Heart right ventricle (tissue), 16 donors: ENCODE measurements at regions of chr9 and their contacts with region 1.

Region 1: GRCh38 chr9:76658535-76659231 is 105.6 kb upstream of the PCA3 start:
- DNase-seq: no peak
- ATAC-seq: peak in 7 of 8 donors; percentile 75 to 93 (median 84)
- H3K4me3 ChIP-seq: no peak overlapping the region
- H3K27ac ChIP-seq: no peak overlapping the region
- H3K4me1 ChIP-seq: peaks cover 0 to 56% (median 14%) of the 10 kb centered on the region in 9 donors
- H3K27me3 ChIP-seq: no peaks in the 10 kb centered on the region
- CTCF ChIP-seq: peak in 8 of 9 donors; percentile 44 to 76 (median 63)

Region 2: GRCh38 chr9:76379512-76379911 is 279.2 kb before region 1 on chr9:
- intact Hi-C with region 1: no loop called
- DNase-seq: no peak
- ATAC-seq: no peak
- H3K4me3 ChIP-seq: no peak overlapping the region
- H3K27ac ChIP-seq: no peak overlapping the region
- H3K4me1 ChIP-seq: peaks cover 0 to 17% (median 10%) of the 10 kb centered on the region in 9 donors
- H3K27me3 ChIP-seq: no peaks in the 10 kb centered on the region
- CTCF ChIP-seq: no peak

Region 3: DNA sequence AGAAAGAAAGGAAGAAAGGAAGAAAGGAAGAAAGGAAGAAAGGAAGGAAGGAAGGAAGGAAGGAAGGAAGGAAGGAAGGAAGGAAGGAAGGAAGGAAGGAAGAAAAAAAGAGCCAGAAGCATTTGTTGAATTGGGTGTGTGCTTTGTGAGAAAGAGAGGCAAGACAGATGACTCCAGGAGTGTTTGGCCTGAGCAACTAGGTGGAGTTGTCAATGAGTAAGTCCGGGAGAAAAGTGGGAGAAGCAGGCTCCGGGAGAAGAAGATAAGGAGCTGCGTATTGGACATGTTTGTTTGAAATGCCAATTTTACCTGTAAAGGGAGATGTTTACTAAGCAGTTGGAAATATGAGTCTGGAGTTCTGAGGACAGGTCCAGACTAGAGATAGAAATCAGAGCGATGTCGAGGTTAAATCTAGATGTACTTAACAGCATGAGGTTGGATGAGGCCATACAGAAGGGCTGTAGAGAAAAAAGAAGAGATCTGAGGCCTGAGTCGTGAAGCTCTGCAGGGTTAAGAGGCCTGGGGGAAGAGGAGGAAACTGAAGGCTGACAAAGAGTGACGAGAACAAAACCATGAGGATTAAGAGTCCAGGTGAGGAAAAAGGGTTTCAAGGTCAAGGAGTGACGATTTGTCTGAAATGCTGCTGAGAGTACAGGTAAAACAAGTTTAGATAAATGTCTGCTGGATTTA is 214.6 kb before region 1 on chr9:
- intact Hi-C with region 1: loop called in 9 of 10 experiments (anchors 1 to 5 kb)
- DNase-seq: no peak
- ATAC-seq: no peak
- H3K4me3 ChIP-seq: no peak overlapping the region
- H3K27ac ChIP-seq: no peak overlapping the region
- H3K4me1 ChIP-seq: peaks cover 0 to 7% (median 0%) of the 10 kb centered on the region in 9 donors
- H3K27me3 ChIP-seq: no peaks in the 10 kb centered on the region
- CTCF ChIP-seq: no peak

Region 4: GRCh38 chr9:76451234-76451633 is 207.4 kb before region 1 on chr9:
- intact Hi-C with region 1: loop called (anchors 1 to 5 kb)
- DNase-seq: no peak
- ATAC-seq: peak in 1 of 8 donors; percentile 68
- H3K4me3 ChIP-seq: no peak overlapping the region
- H3K27ac ChIP-seq: no peak overlapping the region
- H3K4me1 ChIP-seq: peaks cover 0 to 8% (median 0%) of the 10 kb centered on the region in 9 donors
- H3K27me3 ChIP-seq: no peaks in the 10 kb centered on the region
- CTCF ChIP-seq: no peak

Region 5: GRCh38 chr9:76458903-76459690 is 199.6 kb before region 1 on chr9 and contains the start of gene GCNT1:
- intact Hi-C with region 1: loop called in 2 of 10 experiments (anchors 1 to 5 kb)
- DNase-seq: peak; percentile 76 to 88
- ATAC-seq: peak; percentile 93 to 98 (median 96)
- H3K4me3 ChIP-seq: peak within 1 kb of the TSS; percentile 26 to 89 (median 71)
- H3K27ac ChIP-seq: peak within 1 kb of the TSS in 9 of 10 donors; percentile 25 to 80 (median 62)
- H3K4me1 ChIP-seq: peaks cover 0 to 55% (median 11%) of the 10 kb centered on the region in 9 donors
- H3K27me3 ChIP-seq: peaks cover 0 to 6% (median 0%) of the 10 kb centered on the region in 7 donors
- CTCF ChIP-seq: peak in 8 of 9 donors; percentile 21 to 71 (median 47)
- total RNA-seq, gene GCNT1: 0.66 to 8.1 (median 2.3) TPM

Region 6: GRCh38 chr9:76716085-76716672 is 57.5 kb after region 1 on chr9:
- intact Hi-C with region 1: no loop called
- DNase-seq: no peak
- ATAC-seq: no peak
- H3K4me3 ChIP-seq: no peak overlapping the region
- H3K27ac ChIP-seq: no peak overlapping the region
- H3K4me1 ChIP-seq: peaks cover 0 to 11% (median 6%) of the 10 kb centered on the region in 9 donors
- H3K27me3 ChIP-seq: peaks cover 0 to 7% (median under 1%) of the 10 kb centered on the region in 7 donors
- CTCF ChIP-seq: no peak

Region 7: DNA sequence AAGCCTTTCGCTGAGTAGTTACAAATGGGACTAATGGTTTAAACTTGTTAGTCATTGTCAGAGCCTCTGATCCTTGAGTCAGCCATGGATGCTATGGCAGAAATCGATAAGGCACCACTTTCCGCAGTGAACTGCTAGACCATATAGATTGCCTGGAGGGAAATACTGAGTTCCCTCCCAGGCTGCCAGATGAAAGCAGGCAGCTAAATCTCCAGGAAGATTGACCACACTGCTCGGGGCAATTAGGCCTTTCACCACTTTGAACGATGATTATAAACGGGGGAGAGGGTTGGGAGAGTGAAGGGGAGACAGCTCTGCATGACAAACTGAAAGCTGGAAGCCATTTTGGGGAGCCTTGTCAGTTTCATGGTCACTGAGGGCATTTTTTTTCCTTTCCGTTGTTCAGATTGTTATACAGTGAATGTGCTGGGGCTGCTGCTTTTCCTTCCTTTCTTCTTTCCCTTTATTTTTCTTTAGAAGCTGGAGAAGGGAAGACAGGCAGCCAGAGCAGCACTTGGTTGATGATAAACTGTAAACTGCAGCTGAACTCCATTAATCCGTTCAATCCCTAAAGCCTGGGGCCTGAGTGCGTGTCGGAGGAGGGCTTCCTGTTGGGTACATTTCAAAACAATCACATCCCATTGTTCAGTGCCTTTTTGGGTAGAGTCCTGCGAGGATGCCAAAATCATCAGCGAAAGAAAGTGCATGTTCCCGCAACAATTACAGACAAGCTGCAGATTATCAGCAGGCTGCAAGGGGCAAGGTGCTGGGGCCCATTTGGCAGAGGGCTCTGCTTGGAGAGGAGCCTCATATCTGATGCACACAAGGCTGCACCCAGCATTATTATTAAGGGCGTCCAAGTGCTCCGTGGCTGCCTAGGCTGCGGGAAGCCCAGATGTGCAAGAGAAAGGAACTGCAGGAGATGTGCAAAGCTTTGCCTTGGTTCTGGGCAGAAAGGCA is 1946.6 kb after region 1 on chr9:
- intact Hi-C with region 1: no loop called
- DNase-seq: no peak
- ATAC-seq: no peak
- H3K4me3 ChIP-seq: no peak overlapping the region
- H3K27ac ChIP-seq: no peak overlapping the region
- H3K4me1 ChIP-seq: no peaks in the 10 kb centered on the region
- H3K27me3 ChIP-seq: peaks cover 0 to 12% (median 0%) of the 10 kb centered on the region in 7 donors
- CTCF ChIP-seq: no peak